ENCODE measurements at regions of chr22 and their contacts with region 1.

Region 1: DNA sequence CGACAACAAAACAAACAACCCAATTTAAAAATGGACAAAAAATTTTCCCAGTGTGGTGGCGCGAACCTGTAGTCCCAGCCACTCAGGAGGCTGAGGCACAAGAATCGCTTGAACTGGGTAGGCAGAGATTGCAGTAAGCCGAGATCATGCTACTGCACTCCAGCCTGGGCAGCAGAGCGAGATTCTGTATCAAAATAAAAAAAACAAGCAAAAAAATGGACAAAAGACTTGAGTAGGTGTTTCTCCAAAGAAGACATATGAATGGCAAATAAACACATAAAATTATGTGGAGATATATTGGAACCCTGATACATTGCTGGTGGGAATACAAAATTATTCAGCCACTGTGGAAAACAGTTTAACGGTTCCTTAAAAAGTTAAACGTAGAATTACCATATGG is 27.4 kb upstream of the MAPK1 start:
- DNase-seq: no peak
- H3K4me3 ChIP-seq: no peak overlapping the region
- H3K27ac ChIP-seq: no peak overlapping the region
- H3K4me1 ChIP-seq: no peaks in the 10 kb centered on the region
- H3K27me3 ChIP-seq: no peaks in the 10 kb centered on the region
- CTCF ChIP-seq: no peak
- POLR2A ChIP-seq: no peak

Region 2: GRCh38 chr22:21942407-21943343 is 47.9 kb after region 1 on chr22:
- intact Hi-C with region 1: no loop called
- DNase-seq: no peak
- H3K4me3 ChIP-seq: peak overlapping the region in 1 of 2 donors; percentile 13
- H3K27ac ChIP-seq: peak overlapping the region; percentile 88
- H3K4me1 ChIP-seq: peaks cover 94% of the 10 kb centered on the region
- H3K27me3 ChIP-seq: no peaks in the 10 kb centered on the region
- CTCF ChIP-seq: peak in 1 of 3 experiments; percentile 8
- POLR2A ChIP-seq: no peak

Region 3: GRCh38 chr22:22531770-22532546 is 637.2 kb after region 1 on chr22:
- intact Hi-C with region 1: loop called (anchors 5 kb)
- DNase-seq: no peak
- H3K4me3 ChIP-seq: no peak overlapping the region
- H3K27ac ChIP-seq: no peak overlapping the region
- H3K4me1 ChIP-seq: no peaks in the 10 kb centered on the region
- H3K27me3 ChIP-seq: no peaks in the 10 kb centered on the region
- CTCF ChIP-seq: no peak
- POLR2A ChIP-seq: no peak